A673 (cell line): ENCODE measurements at regions of chr1 and their contacts with region 1.

Region 1: DNA sequence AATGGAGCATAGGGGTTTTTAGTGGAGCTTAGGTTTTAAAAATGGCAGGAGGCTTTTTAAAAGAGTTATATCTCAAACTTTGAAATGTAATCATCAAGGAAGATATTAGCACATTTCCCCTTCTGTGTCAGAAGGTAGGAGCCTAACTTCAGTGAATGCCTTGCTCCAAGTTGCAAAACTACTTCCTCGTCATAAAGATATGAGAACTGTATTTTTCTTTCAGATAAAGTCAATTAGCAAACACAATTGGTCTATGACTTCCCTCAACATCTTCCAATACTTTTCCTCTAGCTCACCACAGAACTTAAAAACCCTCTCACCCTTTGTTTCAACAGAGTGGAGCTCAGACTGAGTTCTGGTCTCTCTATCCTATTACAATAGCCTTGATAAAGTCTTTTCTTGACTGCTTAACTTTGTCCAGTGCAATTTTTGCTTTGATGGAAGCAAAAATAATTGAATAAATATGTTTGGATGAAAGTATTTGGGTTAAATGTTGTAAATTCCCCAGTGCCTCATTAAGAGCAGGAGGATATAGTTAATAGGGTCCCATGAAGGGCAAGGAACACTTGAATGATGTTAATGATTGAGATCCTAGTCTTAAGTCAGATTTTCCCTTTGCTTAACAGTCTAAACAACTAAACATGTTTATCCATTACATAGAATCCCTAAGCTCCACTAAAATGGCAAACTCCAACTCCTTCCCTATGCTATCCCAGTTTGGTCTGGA is 58.9 kb downstream of the TNFSF18 start:
- DNase-seq: no peak
- H3K4me3 ChIP-seq: no peak overlapping the region
- H3K27ac ChIP-seq: no peak overlapping the region
- H3K4me1 ChIP-seq: no peaks in the 10 kb centered on the region
- H3K27me3 ChIP-seq: no peaks in the 10 kb centered on the region
- CTCF ChIP-seq: no peak

Region 2: GRCh38 chr1:173020138-173020750 is 28.4 kb after region 1 on chr1:
- CTCF ChIA-PET with region 1: no interaction called
- POLR2A ChIA-PET with region 1: no interaction called
- intact Hi-C with region 1: no loop called
- DNase-seq: no peak
- H3K4me3 ChIP-seq: no peak overlapping the region
- H3K27ac ChIP-seq: no peak overlapping the region
- H3K4me1 ChIP-seq: peaks cover 9% of the 10 kb centered on the region
- H3K27me3 ChIP-seq: no peaks in the 10 kb centered on the region
- CTCF ChIP-seq: no peak

Region 3: DNA sequence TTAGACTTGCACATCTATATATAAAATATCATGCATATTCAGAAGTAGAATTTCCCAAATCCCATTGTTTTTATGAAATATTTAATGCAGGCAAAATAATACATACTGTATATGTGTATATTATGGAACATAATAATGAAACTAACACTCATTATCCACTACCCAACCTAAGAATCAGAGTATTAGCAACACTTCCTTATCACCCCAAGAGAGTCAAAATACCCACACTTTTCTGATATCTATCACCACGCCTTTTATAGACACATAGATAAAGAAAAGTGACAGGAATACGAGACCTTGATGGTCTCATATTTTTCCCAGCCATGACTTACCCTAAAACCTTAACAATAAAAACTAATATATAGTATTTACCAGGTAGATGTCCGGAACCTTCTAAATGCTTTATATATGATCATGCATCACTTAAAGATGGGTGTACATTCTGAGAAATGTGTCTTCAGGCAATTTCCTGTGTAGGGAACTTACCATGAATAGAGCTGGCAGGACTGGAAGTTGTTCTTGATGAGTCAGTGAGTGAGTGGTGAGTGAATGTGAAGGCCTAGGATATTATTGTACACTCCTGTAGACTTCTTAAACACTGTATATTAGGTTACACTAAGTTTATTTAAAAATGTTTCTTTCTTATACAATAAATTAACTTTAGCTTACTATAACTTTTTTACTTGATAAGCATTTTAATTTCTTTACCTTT is 169.8 kb after region 1 on chr1:
- CTCF ChIA-PET with region 1: no interaction called
- POLR2A ChIA-PET with region 1: interaction called, 15 read pairs
- intact Hi-C with region 1: no loop called
- DNase-seq: no peak
- H3K4me3 ChIP-seq: no peak overlapping the region
- H3K27ac ChIP-seq: no peak overlapping the region
- H3K4me1 ChIP-seq: no peaks in the 10 kb centered on the region
- H3K27me3 ChIP-seq: no peaks in the 10 kb centered on the region
- CTCF ChIP-seq: no peak